Activated naive CD4-positive, alpha-beta T cell treated with anti-CD3 and anti-CD28 coated beads, Interleukin-2, amount 10 ng/mL, durations not matched to agents 7 days and 5 days (primary cell): ENCODE measurements at regions of chr14 and their contacts with region 1.

Region 1: DNA sequence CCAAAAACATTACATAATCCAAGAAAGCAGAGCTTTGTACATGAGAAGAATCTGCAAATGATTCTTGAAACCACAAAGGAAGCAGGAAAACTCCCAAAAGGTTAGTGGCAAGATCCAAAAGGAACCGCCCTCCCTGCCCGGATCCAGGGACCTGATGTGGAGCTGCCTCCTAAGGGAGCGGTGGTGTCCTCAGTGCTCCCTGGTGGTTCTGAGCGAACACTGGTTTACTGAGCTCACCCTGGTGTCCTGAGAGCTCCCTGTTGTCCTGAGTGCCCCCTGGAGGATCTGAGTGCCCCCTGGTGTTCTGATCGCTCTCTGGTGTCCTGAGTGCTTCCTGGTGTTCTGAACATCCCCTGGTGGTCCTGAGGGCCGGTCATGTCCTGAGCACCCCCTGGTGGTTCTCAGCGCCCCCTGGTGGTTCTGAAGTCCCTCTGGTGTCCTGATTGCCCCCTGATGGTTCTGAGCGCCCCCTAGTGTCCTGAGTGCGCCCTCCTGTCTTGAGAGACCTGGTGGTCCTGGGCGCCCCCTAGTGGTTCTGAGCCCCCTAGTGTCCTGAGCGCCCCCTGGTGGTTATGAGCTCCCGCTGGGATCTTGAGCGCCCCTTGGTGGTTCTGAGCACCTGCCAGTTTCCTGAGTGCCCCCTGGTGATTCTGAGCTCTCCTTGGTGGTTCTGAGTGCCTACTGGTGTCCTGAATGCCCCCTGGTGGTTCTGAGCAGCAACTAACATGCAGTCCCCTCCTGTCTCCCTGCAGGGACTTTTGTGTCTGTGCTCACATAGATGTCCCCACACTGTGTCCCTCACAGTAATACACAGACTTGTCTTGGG is 891.1 kb downstream of the TMEM121 start:
- DNase-seq: peak; percentile 90
- H3K4me3 Mint-ChIP-seq: no peak overlapping the region
- H3K27ac Mint-ChIP-seq: peak overlapping the region; percentile 33
- H3K4me1 Mint-ChIP-seq: no peaks in the 10 kb centered on the region
- H3K27me3 Mint-ChIP-seq: peaks cover 30% of the 10 kb centered on the region

Region 2: DNA sequence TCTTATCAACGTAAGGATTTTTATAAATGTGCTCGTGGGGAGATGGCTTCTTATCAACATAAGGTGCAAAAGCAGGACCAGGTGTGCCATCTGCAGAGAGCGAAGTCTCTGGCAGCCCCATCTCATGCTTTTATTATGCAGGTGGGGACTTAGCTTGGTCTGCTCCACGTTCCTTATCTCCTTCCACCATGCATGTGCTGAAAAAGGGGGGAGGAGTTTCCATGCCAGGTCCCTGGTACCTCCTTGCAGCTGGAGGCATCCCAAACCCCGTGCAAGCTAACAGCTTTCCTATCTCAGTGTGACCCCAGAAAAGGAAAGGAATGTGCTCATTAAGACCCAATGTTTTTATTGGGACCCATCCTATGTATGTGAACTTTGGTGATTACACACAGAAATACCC is 282.6 kb before region 1 on chr14:
- CTCF ChIA-PET with region 1: no interaction called
- DNase-seq: no peak
- H3K4me3 Mint-ChIP-seq: no peak overlapping the region
- H3K27ac Mint-ChIP-seq: no peak overlapping the region
- H3K4me1 Mint-ChIP-seq: peaks cover 6% of the 10 kb centered on the region
- H3K27me3 Mint-ChIP-seq: peaks cover 5% of the 10 kb centered on the region

Region 3: GRCh38 chr14:106287506-106287905 is 129.9 kb before region 1 on chr14:
- CTCF ChIA-PET with region 1: interaction called, 15 read pairs
- DNase-seq: no peak
- H3K4me3 Mint-ChIP-seq: no peak overlapping the region
- H3K27ac Mint-ChIP-seq: no peak overlapping the region
- H3K4me1 Mint-ChIP-seq: no peaks in the 10 kb centered on the region
- H3K27me3 Mint-ChIP-seq: peaks cover 35% of the 10 kb centered on the region

Region 4: DNA sequence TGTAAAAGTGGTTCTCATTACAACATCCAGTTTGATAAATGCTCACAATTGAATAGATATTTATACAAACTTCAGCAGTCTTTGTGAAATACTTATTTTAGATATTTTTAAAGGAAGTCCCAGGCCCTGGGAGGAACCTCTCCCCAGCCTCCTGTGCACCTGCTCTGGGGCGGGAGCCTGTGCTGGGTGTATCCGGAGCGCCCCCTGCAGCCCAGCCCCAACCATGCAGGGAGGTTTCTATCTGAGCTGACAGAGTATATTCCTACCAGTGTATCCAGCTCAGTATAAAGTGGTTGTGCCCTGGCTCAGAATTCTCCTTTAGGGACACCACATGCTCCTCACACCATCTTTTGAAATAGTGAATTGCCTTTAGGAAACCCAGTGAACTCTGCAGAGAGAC is 39.2 kb before region 1 on chr14:
- CTCF ChIA-PET with region 1: interaction called, 71 read pairs
- DNase-seq: peak; percentile 60
- H3K4me3 Mint-ChIP-seq: no peak overlapping the region
- H3K27ac Mint-ChIP-seq: no peak overlapping the region
- H3K4me1 Mint-ChIP-seq: peaks cover 20% of the 10 kb centered on the region
- H3K27me3 Mint-ChIP-seq: peaks cover 16% of the 10 kb centered on the region

Region 5: GRCh38 chr14:106436310-106436905 is 19.0 kb after region 1 on chr14:
- CTCF ChIA-PET with region 1: interaction called, 14 read pairs
- DNase-seq: peak; percentile 64
- H3K4me3 Mint-ChIP-seq: no peak overlapping the region
- H3K27ac Mint-ChIP-seq: no peak overlapping the region
- H3K4me1 Mint-ChIP-seq: peaks cover 6% of the 10 kb centered on the region
- H3K27me3 Mint-ChIP-seq: peaks cover 38% of the 10 kb centered on the region

Region 6: GRCh38 chr14:106530423-106531107 is 113.1 kb after region 1 on chr14:
- CTCF ChIA-PET with region 1: interaction called, 22 read pairs
- DNase-seq: peak; percentile 45
- H3K4me3 Mint-ChIP-seq: no peak overlapping the region
- H3K27ac Mint-ChIP-seq: no peak overlapping the region
- H3K4me1 Mint-ChIP-seq: peaks cover 6% of the 10 kb centered on the region
- H3K27me3 Mint-ChIP-seq: peaks cover 44% of the 10 kb centered on the region